Naive thymus-derived CD4-positive, alpha-beta T cell (primary cell): ENCODE measurements at regions of chr13 and their contacts with region 1.

Region 1: GRCh38 chr13:47774671-47774994 is 226.4 kb downstream of the SUCLA2 start:
- DNase-seq: no peak
- ATAC-seq: no peak
- H3K4me3 ChIP-seq: no peak overlapping the region
- H3K4me3 Mint-ChIP-seq: no peak overlapping the region
- H3K27ac ChIP-seq: no peak overlapping the region
- H3K27ac Mint-ChIP-seq: no peak overlapping the region
- H3K4me1 ChIP-seq: no peaks in the 10 kb centered on the region
- H3K4me1 Mint-ChIP-seq: no peaks in the 10 kb centered on the region
- H3K27me3 ChIP-seq: no peaks in the 10 kb centered on the region
- H3K27me3 Mint-ChIP-seq: peaks cover 12 to 30% (median 14%) of the 10 kb centered on the region in 5 donors

Region 2: DNA sequence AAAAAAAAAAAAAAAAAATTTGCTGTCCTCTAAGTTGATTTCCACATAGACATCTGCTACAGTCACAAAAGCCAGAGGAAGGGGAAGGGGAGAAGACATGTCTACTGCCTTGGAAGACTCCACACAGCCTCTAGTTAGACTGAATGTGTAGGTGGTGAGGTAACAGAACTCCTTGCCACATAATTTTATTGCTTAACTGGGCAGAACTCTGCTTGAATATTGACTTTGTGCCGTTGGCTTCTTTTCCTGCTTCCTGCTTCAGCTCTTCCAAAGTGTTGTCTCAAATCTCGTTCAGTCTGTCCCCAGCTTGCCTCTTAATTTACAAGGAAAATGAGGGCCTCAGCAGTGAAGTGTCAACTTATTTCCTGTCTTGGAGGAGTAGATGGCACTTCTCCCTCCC is 1014.8 kb before region 1 on chr13:
- CTCF ChIA-PET with region 1: no interaction called
- POLR2A ChIA-PET with region 1: no interaction called
- intact Hi-C with region 1: loop called (anchors 10 kb)
- DNase-seq: no peak
- ATAC-seq: peak; percentile 51
- H3K4me3 ChIP-seq: no peak overlapping the region
- H3K4me3 Mint-ChIP-seq: no peak overlapping the region
- H3K27ac ChIP-seq: no peak overlapping the region
- H3K27ac Mint-ChIP-seq: no peak overlapping the region
- H3K4me1 ChIP-seq: no peaks in the 10 kb centered on the region
- H3K4me1 Mint-ChIP-seq: peaks cover 0 to 15% (median 0%) of the 10 kb centered on the region in 7 donors
- H3K27me3 ChIP-seq: no peaks in the 10 kb centered on the region
- H3K27me3 Mint-ChIP-seq: peaks cover 0 to 6% (median 0%) of the 10 kb centered on the region in 5 donors

Region 3: DNA sequence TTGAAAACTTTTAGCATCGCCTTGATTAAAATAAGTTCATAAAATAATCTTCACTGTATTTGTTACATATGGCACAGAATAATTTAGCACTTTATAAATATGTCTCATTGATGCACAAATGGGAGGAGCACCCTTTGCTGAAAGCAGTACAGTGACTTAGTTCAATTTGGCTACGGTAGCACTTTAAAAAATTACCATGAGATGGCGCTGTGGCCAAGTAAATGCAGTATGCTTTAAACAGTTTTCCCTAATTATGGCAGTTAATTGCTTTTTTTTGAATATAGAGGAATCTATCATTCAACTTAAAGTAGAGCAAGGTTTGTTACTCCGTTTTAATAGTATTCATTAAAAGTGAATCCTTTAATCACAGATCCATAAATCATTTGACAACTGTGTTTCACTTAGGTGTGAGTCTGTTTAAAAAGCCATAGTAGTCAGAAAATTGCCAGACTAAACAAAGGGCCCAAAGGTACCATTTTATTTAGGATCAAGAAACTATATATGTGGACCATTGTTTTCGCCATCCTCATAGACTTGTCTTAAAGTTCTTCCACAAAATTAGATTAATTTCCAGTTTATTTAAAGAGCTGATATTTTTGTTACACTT is 942.9 kb before region 1 on chr13:
- CTCF ChIA-PET with region 1: interaction called, 3 read pairs
- POLR2A ChIA-PET with region 1: no interaction called
- intact Hi-C with region 1: loop called in 1 of 2 experiments (anchors 1 kb)
- DNase-seq: peak in 4 of 9 donors; percentile 2 to 20 (median 13)
- ATAC-seq: peak; percentile 58
- H3K4me3 ChIP-seq: no peak overlapping the region
- H3K4me3 Mint-ChIP-seq: no peak overlapping the region
- H3K27ac ChIP-seq: no peak overlapping the region
- H3K27ac Mint-ChIP-seq: no peak overlapping the region
- H3K4me1 ChIP-seq: no peaks in the 10 kb centered on the region
- H3K4me1 Mint-ChIP-seq: no peaks in the 10 kb centered on the region
- H3K27me3 ChIP-seq: no peaks in the 10 kb centered on the region
- H3K27me3 Mint-ChIP-seq: peaks cover 0 to 29% (median 6%) of the 10 kb centered on the region in 5 donors

Region 4: DNA sequence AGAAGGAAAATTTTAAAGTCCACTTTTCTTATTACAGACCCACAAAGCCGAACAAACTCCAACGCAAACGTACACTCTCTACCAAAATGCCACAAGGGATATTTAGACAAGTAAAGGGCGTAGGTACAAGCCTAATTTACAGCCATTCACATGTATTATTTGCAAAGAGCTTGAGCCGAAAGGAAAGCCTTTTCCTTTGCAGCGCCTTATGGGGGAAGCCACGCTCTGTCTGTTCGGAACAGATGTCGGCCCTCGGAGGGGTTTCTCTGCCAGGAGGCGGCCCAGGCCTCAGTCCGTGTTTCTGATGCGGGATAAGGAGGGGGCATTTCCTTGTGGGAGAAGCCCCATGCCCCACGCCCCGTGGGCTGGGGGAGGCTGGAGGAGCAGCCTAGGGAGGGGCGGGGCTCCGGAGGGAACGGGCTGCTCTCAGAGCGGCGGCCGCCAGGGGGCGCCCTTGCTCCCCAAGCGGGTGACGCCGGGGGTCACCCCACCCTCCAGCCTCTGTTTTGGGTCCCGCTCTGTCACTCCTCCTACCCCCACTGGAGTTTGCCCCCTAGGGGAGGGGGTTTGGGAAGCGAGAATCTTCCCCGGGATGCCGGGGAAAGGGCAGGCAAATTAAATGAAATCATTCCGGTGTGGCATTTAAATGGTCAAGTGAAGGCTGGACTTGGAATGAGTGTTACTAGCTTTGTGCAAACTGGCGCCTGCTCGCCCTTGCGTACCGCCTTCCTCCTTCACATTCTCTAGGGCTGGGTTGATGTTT is 880.7 kb before region 1 on chr13:
- CTCF ChIA-PET with region 1: no interaction called
- POLR2A ChIA-PET with region 1: no interaction called
- intact Hi-C with region 1: loop called in 1 of 2 experiments (anchors 5 kb)
- DNase-seq: peak; percentile 33 to 80 (median 66)
- ATAC-seq: peak; percentile 91
- H3K4me3 ChIP-seq: peak overlapping the region; percentile 53
- H3K4me3 Mint-ChIP-seq: peak overlapping the region; percentile 66 to 82 (median 78)
- H3K27ac ChIP-seq: no peak overlapping the region
- H3K27ac Mint-ChIP-seq: no peak overlapping the region
- H3K4me1 ChIP-seq: peaks cover 0 to 4% of the 10 kb centered on the region in 2 donors
- H3K4me1 Mint-ChIP-seq: peaks cover 0 to 38% (median 28%) of the 10 kb centered on the region in 7 donors
- H3K27me3 ChIP-seq: no peaks in the 10 kb centered on the region
- H3K27me3 Mint-ChIP-seq: peaks cover 44 to 84% (median 74%) of the 10 kb centered on the region in 5 donors

Region 5: DNA sequence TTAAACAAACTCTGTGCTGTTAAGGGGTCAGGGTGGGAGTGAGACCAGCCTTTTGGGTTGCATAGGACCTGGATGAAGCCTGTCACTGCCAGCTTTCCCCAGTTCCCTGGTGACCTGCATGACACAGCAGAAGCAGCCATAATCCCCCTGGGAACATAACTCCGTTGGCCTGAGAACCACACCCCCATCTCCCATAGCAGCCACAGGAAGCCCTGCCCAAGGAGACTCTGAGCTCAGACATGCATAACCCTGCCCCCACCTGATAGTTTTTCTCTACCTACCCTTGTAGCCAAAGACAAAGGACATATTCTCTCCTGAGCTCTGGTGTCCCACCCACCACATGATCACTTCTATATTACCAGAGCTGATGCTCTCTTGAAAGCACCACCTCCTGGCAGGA is 464.3 kb before region 1 on chr13:
- CTCF ChIA-PET with region 1: no interaction called
- POLR2A ChIA-PET with region 1: no interaction called
- intact Hi-C with region 1: no loop called
- DNase-seq: no peak
- ATAC-seq: no peak
- H3K4me3 ChIP-seq: no peak overlapping the region
- H3K4me3 Mint-ChIP-seq: no peak overlapping the region
- H3K27ac ChIP-seq: no peak overlapping the region
- H3K27ac Mint-ChIP-seq: no peak overlapping the region
- H3K4me1 ChIP-seq: no peaks in the 10 kb centered on the region
- H3K4me1 Mint-ChIP-seq: no peaks in the 10 kb centered on the region
- H3K27me3 ChIP-seq: no peaks in the 10 kb centered on the region
- H3K27me3 Mint-ChIP-seq: peaks cover 0 to 20% (median 0%) of the 10 kb centered on the region in 5 donors

Region 6: DNA sequence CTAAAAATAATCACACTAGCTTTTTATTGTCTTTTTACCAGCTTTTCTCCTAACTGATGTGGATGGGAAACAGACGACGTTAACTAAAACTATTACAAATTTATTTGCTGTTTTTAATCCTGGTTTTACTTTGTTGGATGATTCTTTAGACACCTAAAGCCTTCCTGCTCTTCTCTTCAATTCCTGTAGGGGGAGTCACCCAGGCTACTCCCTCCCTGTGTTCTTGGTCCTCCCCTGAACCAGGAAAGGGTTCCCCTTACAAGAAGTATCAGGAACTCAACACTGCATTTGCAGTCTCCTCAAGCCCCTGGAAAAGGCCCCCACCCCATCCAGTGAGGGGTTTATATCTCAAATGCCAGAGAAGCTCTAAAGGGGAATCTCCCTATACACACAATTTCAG is 20.3 kb after region 1 on chr13:
- CTCF ChIA-PET with region 1: no interaction called
- POLR2A ChIA-PET with region 1: no interaction called
- intact Hi-C with region 1: no loop called
- DNase-seq: no peak
- ATAC-seq: no peak
- H3K4me3 ChIP-seq: no peak overlapping the region
- H3K4me3 Mint-ChIP-seq: no peak overlapping the region
- H3K27ac ChIP-seq: no peak overlapping the region
- H3K27ac Mint-ChIP-seq: no peak overlapping the region
- H3K4me1 ChIP-seq: no peaks in the 10 kb centered on the region
- H3K4me1 Mint-ChIP-seq: no peaks in the 10 kb centered on the region
- H3K27me3 ChIP-seq: no peaks in the 10 kb centered on the region
- H3K27me3 Mint-ChIP-seq: peaks cover 0 to 6% (median 3%) of the 10 kb centered on the region in 5 donors

Region 7: DNA sequence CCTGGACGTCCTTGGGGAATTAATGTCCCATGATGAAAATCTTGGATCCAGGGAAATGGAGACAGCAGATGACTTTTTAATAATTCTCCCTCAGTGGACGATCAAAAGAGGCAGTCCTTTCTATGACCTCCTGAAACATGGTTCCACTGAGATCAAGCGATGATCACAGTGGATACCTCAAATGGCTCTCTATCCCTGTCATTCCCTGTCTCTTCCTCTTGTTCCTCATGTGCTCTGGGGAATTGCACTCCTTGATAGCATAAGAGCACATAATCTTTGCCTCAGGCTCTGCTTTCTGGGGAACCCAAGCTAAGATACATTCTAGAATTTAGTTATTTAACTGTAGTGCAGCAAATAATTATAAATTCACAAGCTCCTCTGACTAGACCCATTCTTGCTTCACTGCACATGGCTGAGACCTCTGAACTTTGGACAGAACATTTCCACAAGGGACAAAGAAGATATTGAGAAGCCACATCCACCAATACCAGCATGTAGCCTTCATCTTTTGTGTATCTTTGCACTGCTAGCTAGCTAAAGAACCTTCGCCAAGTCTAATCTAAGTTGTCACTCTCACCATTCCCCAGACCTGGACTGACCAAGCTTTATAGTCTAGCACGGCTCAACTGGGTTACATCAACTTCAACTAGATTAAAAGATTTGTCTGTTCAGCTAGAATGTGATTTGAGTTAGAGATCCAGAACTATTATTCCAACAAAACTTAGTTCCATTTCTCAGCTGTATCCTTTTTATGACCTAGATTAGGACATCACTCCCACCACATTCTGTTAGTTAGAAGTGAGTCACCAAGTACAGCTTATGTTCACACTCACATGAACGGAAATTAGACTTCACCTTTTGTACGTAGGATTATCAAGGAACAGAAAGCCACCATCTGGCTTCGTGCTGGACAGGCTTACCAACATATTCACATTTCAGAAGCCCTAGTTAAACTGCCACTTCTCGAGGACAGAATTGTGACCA is 83.7 kb after region 1 on chr13:
- CTCF ChIA-PET with region 1: no interaction called
- POLR2A ChIA-PET with region 1: no interaction called
- intact Hi-C with region 1: no loop called
- DNase-seq: no peak
- ATAC-seq: no peak
- H3K4me3 ChIP-seq: no peak overlapping the region
- H3K4me3 Mint-ChIP-seq: no peak overlapping the region
- H3K27ac ChIP-seq: no peak overlapping the region
- H3K27ac Mint-ChIP-seq: no peak overlapping the region
- H3K4me1 ChIP-seq: no peaks in the 10 kb centered on the region
- H3K4me1 Mint-ChIP-seq: no peaks in the 10 kb centered on the region
- H3K27me3 ChIP-seq: no peaks in the 10 kb centered on the region
- H3K27me3 Mint-ChIP-seq: peaks cover 0 to 13% (median 9%) of the 10 kb centered on the region in 5 donors